Sciatic nerve (tissue), 2 donors: ENCODE measurements at regions of chr16 and their contacts with region 1.

Region 1: DNA sequence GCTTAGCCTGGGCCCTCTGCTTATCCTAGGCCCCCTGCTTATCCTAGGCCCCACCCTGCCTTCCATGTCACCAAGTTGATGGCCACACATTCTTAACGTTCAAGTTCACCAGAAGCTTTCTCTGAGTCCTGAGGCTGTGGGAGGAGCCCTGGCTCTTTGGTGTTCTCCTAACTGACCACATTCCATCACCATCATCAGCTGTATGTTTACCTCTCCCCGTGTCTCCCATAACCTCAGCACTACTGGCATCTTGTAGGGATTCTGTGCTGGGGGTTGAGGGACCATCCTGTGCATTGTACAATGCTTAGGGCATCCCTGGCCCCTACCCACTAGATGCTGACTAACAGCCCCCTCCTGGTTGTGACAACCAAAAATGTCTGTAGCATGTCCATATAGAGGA is 99.3 kb downstream of the NDE1 start:
- DNase-seq: no peak
- ATAC-seq: no peak

Region 2: DNA sequence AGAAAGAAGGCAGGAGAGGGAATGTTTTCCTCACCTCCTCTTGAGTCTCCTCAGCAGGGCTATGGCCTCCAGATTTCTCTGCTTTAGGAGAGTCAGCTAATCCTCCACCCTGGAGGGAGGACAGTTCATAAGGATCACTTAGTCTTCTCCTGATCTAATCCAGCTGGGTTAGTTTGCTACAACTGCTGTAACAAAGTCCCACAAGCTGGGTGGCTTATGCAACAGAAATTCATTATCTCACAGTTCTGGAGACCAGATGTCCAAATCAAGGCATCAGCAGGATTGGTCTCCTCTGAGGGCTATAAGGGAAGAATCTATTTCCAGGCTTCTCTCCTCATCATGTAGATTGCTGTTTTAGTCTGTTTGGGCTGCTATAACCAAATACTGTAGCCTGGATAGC is 1762.0 kb after region 1 on chr16:
- intact Hi-C with region 1: loop called (anchors 5 kb)
- DNase-seq: no peak
- ATAC-seq: peak; percentile 93